Right ventricle myocardium inferior (tissue), 1 donor: ENCODE measurements at regions of chr9 and their contacts with region 1.

Region 1: DNA sequence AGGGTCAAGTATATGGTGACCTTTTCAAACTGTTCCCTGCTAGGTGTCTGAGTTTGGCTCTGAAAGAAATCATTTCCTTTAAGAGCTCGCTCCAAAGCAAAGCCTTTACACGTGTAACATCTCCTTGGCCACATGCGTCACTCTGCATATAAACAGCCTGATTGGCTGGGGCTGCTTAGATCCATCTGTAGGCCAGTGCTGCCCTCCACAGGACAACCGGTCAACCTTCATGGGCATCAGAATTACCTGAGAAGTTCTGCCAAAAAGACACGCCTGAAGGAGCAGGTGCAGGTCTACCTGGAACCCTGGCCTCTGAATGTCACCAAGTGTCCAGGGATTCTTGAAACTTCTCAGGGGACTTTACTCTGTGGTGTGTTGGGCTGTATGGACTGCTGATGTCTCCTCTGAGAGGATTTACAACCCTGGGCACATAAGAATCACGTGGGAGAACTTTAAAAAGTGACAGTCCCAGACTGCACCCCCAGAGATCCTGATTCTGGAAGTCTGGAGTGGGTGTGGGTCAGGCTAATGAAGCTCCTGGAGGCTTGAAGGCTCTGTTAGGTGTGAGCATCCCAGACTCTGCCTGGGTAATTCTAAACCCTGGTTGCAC is 497.6 kb downstream of the GADD45G start:
- DNase-seq: peak; percentile 80
- ATAC-seq: peak; percentile 83

Region 2: DNA sequence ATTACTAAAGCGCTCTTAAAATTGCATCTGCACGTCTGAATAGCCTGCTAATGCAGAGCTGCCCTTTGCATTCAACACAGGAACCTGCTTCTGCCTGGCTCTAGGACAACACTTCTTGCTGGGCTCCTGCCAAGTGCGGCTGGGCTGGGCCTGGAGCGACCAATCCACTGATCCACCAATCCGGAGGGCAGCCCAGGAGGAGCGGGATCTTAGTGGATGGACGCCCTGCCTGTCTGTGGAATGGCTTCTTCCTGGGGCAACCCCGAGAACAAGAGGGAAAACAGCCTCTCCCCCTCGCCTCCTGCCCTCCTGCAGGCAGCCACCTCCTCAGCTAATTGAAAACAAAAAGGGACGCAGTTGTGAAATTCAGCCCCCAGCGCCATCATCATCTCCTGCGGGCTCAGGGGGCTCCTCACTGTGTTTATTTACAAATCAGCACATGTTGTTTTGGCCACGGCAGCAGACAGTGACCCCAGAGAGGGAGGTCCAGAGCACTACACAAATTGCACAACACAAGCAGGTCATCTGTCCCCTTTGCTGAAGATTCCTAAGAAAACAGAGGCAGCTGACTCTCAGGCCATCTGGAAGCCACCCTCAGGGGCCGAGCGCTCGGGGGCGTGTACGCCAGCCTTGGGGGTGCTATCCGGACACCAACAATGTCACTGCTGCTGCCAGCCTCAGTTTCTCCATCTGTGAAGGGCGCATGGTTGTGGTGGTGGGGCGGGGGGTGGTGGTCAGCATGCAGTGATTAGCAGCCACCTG is 440.3 kb before region 1 on chr9:
- intact Hi-C with region 1: loop called (anchors 10 kb)
- DNase-seq: peak; percentile 97
- ATAC-seq: peak; percentile 93

Region 3: GRCh38 chr9:89929673-89930480 is 172.5 kb before region 1 on chr9:
- intact Hi-C with region 1: loop called (anchors 2 kb)
- DNase-seq: no peak
- ATAC-seq: peak; percentile 82

Region 4: GRCh38 chr9:90147426-90147825 is 45.0 kb after region 1 on chr9:
- intact Hi-C with region 1: no loop called
- DNase-seq: no peak
- ATAC-seq: no peak

Region 5: GRCh38 chr9:90393365-90394150 is 291.2 kb after region 1 on chr9:
- intact Hi-C with region 1: no loop called
- DNase-seq: no peak
- ATAC-seq: no peak